PC-9 (cell line): ENCODE measurements at regions of chr12 and their contacts with region 1.

Region 1: DNA sequence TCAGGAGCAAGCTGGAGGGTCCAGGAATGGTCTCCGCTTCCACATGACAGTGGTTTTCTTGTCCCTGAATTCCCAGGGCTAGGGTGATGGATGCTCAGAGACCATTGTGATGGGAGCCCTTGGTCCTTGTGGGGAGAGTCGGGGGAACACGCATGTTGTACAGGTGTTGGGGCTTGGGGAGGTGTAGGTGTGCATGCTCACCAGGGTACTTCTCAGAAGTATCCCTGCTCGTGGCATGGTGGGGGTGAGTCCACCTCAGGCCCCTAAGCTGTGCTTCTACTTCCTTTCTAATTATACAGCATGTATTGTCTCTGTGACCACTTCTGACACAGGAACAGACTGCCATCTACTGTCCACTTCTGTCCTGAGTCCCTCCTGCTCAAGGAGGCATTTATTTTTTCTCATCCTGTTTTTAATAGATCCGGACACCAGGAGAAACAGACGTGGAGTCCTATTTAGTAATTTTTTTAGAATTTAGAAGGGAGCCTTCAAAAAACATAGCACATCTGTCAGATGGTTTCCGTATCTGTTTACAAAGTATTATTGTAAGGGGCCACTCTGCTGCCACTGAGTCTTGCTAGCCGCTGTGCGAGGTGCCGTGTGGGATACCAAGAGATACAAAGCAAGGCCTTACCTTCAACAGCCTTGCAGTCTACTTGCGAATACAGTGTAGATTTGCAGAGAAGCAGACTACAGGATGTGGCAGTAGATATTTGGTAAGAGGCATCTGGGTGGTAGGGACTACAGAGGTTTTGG is 10.5 kb downstream of the NTF3 start:
- DNase-seq: peak; percentile 17 to 43
- H3K4me3 ChIP-seq: no peak overlapping the region
- H3K27ac ChIP-seq: no peak overlapping the region
- H3K4me1 ChIP-seq: no peaks in the 10 kb centered on the region
- H3K27me3 ChIP-seq: peaks cover 28% of the 10 kb centered on the region
- CTCF ChIP-seq: peak; percentile 68

Region 2: DNA sequence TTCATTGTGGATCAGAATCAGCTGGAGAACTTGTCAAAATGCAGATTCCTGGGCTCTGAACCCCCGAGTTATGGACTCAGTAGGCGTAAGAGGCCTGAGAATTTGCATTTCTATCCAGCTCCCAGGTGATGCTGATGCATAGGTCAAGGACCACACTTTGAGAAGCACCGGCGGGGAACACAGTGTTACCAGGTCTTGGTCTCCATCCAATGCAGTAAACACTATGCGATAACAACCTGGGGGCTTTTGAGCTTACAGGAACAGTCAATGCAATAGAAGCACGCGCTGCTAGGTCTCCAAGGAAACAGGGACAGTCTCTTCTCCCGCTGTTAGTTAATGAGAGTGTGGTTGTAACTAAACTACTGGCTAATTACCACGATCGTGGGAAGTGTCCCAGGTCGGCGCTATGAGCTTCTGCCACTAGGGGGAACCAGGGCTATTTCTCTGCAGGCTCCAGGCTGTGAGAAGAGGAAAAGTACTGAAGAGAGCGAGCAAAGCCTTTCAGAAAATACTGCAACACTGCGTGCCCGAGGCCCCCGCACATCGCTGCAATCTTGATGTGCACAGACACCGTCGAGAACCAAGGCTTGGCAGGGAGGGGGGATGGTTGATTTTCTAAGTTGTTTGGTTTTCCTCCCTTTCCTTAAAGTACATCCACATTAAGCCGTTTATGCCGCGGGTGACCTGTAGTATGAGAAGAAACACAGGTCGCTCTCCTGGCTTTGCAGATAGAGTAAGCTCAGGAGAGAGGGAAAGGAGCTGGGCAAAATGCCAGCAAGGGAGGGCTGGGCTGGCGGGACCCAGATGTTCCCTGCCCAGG is 584.7 kb before region 1 on chr12:
- CTCF ChIA-PET with region 1: no interaction called
- POLR2A ChIA-PET with region 1: no interaction called
- intact Hi-C with region 1: loop called (anchors 5 kb)
- DNase-seq: peak in 1 of 2 experiments; percentile 53
- H3K4me3 ChIP-seq: no peak overlapping the region
- H3K27ac ChIP-seq: no peak overlapping the region
- H3K4me1 ChIP-seq: no peaks in the 10 kb centered on the region
- H3K27me3 ChIP-seq: peaks cover 95% of the 10 kb centered on the region
- CTCF ChIP-seq: peak; percentile 89

Region 3: GRCh38 chr12:5171701-5172100 is 270.7 kb before region 1 on chr12:
- CTCF ChIA-PET with region 1: no interaction called
- POLR2A ChIA-PET with region 1: no interaction called
- intact Hi-C with region 1: loop called (anchors 5 kb)
- DNase-seq: peak in 1 of 2 experiments; percentile 15
- H3K4me3 ChIP-seq: no peak overlapping the region
- H3K27ac ChIP-seq: no peak overlapping the region
- H3K4me1 ChIP-seq: peaks cover 23% of the 10 kb centered on the region
- H3K27me3 ChIP-seq: peaks cover 27% of the 10 kb centered on the region
- CTCF ChIP-seq: peak; percentile 74